Esophagus muscularis mucosa (tissue), 4 donors: ENCODE measurements at regions of chr18 and their contacts with region 1.

Region 1: DNA sequence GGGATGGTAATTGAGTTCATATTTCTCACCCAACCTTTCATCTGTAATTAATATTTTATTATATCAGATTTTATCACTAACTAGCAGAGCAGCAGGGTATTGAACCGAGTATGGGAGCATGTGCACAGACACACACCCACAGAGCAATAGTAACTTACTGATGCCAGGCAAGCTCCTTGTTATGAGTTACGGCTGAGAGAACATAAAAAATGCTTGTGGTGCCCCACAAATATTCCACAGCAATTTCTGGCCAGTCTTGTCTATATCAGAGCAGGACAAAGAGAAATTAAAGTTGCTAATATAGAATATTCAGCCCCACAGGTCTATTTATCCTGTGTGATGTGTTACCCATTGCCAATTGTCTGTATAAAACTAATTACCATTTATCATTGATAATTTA is 501.8 kb upstream of the RAB12 start:
- DNase-seq: no peak
- H3K4me3 ChIP-seq: no peak overlapping the region
- H3K27ac ChIP-seq: no peak overlapping the region
- H3K4me1 ChIP-seq: no peaks in the 10 kb centered on the region
- H3K27me3 ChIP-seq: no peaks in the 10 kb centered on the region
- CTCF ChIP-seq: no peak
- EP300 ChIP-seq: no peak
- POLR2A ChIP-seq: no peak

Region 2: GRCh38 chr18:7789856-7790552 is 317.4 kb before region 1 on chr18:
- intact Hi-C with region 1: loop called (anchors 10 kb)
- DNase-seq: no peak
- H3K4me3 ChIP-seq: no peak overlapping the region
- H3K27ac ChIP-seq: no peak overlapping the region
- H3K4me1 ChIP-seq: peaks cover 0 to 16% (median 8%) of the 10 kb centered on the region in 4 donors
- H3K27me3 ChIP-seq: no peaks in the 10 kb centered on the region
- CTCF ChIP-seq: peak; percentile 48 to 62 (median 58)
- EP300 ChIP-seq: no peak
- POLR2A ChIP-seq: no peak